ENCODE measurements at regions of chr7 and their contacts with region 1.

Region 1: GRCh38 chr7:121054925-121055324 is 66.4 kb downstream of the CPED1 start:
- DNase-seq: no peak
- H3K4me3 ChIP-seq: no peak overlapping the region
- CTCF ChIP-seq: no peak

Region 2: DNA sequence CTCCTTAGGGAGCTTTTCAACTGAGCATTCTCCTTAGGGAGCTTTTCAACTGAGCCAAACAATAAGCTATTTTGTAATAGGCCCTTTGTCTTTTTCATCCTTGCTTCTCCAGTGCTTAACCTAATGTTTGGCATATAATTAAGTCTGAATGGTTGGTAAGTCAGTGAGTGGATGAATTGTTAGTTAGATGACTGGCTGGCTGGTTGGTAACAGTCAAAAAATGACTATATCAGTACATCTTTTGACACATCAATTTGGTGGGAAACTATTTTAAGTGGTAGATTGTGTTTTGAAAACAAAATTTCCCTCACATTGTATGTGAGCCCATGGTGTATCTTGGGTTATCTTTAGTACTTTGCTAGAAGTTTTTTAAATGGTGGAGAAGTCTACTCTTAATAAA is 88.0 kb before region 1 on chr7:
- in situ Hi-C with region 1: no loop called
- DNase-seq: no peak
- H3K4me3 ChIP-seq: no peak overlapping the region
- CTCF ChIP-seq: no peak

Region 3: DNA sequence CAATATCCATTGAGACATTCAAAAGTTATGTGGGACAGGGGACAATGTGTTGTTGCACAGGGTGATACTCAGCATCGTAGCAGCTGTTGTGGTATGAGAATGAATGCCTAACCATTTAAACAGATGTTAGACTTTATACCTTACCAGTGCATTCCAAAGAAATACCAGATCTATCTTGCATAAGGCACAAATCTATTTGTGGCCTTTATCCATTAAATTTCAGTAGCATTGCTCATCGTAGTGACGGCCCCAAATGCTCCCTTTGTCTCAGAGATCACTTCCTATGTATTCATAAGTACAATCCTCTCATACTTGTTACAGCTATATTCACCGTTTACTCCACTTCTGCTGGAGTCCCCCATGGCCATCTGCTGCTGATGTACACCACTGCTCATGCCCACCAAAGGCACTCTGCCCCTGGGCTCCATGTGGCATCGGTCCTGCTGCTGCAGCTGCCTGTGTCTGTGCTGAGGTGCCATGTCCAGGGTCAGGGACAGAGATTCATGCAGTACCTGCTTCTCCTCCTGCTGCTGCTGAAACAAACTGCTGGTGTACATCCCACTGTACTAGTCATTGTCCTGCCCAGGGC is 29.9 kb after region 1 on chr7:
- in situ Hi-C with region 1: loop called (anchors 5 kb)
- DNase-seq: peak; percentile 70
- H3K4me3 ChIP-seq: no peak overlapping the region
- CTCF ChIP-seq: no peak